Activated CD8-positive, alpha-beta T cell treated with anti-CD3 and anti-CD28 coated beads, Interleukin-2, amount 10 ng/mL, durations not matched to agents 7 days and 5 days (primary cell): ENCODE measurements at regions of chr12 and their contacts with region 1.

Region 1: GRCh38 chr12:100200463-100201181 is at the start of gene ACTR6:
- DNase-seq: peak; percentile 98
- ATAC-seq: peak; percentile 81
- H3K4me3 Mint-ChIP-seq: peak within 1 kb of the TSS; percentile 99
- H3K27ac Mint-ChIP-seq: peak within 1 kb of the TSS; percentile 100
- H3K4me1 Mint-ChIP-seq: peaks cover 30% of the 10 kb centered on the region
- H3K27me3 Mint-ChIP-seq: no peaks in the 10 kb centered on the region
- total RNA-seq, gene ACTR6: 29.5 to 34.8 TPM

Region 2: DNA sequence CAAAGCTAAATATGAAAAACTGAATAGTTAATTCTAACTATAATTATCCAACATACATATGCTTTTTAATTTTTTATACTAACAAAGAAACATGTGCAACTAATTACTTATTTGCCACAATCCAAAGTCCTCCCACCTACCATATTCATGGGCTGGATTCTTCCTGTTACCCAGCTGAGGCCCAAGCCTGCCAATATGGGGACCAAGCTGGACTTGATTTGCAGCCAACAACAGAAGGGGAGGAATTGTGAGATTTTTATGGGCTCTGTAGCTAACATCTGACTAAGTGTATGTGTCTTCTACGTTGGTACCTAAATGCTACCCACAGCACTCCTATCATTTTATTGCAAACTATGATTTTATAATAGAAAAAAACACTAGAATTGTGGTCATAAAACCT is 202.8 kb before region 1 on chr12:
- CTCF ChIA-PET with region 1: no interaction called
- POLR2A ChIA-PET with region 1: no interaction called
- DNase-seq: no peak
- ATAC-seq: no peak
- H3K4me3 Mint-ChIP-seq: no peak overlapping the region
- H3K27ac Mint-ChIP-seq: no peak overlapping the region
- H3K4me1 Mint-ChIP-seq: no peaks in the 10 kb centered on the region
- H3K27me3 Mint-ChIP-seq: no peaks in the 10 kb centered on the region

Region 3: DNA sequence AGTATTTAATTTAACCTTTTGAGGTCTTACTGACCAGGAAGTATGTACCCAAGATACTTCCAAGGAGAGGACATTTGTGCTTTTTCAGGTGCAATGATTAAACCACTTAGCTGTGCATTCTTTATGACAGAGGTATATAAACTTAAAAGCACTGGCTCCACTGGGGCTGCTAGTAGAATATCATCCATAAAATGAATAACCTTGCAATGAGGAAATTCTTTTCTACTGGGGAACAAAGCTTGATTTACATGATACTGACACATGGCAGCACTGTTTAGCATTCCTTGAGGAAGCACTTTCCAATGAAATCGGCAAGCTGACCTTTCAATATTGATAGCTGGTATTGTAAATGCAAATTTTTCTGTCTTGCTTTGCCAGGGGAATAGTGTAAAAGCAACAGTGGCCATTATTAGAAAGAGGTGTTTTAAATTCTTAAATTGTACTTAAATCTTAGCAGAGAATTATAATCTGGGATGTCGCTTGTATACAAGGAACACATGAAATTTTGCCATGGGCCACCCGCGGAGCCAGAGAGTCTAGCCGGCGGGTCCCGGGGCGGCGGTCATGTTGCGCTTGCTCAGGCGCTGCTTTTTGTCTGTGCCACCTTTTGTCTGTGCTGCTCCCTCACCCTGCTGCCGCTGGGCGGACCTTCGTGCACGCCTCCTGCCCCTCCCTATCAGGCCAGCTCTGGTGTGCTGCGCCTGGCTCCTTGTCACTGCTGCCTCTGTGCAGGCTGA is 37.0 kb before region 1 on chr12:
- CTCF ChIA-PET with region 1: interaction called, 4 read pairs
- POLR2A ChIA-PET with region 1: interaction called, 11 read pairs
- DNase-seq: peak; percentile 83
- ATAC-seq: peak; percentile 100
- H3K4me3 Mint-ChIP-seq: peak overlapping the region; percentile 65
- H3K27ac Mint-ChIP-seq: peak overlapping the region; percentile 34
- H3K4me1 Mint-ChIP-seq: peaks cover 15% of the 10 kb centered on the region
- H3K27me3 Mint-ChIP-seq: no peaks in the 10 kb centered on the region

Region 4: DNA sequence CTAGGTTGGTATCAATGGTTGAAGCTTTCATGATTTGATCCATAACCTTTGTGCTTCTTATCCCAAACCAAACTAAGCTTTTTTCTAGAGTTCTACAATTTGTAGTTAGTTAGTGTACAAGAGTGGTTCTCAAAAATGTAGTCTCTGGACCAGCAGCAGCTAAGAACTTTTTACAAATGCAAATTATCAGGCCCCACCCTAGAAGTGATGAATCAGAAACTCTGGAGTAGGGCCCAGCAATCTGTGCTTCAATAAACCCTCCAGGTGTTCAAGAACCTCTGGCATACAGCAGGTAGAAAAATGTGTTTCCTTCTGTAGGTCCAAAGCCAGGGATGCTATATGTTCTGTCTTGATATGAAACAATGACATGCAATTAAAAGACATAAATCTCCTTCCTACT is 26.1 kb before region 1 on chr12:
- CTCF ChIA-PET with region 1: no interaction called
- POLR2A ChIA-PET with region 1: no interaction called
- DNase-seq: no peak
- ATAC-seq: no peak
- H3K4me3 Mint-ChIP-seq: no peak overlapping the region
- H3K27ac Mint-ChIP-seq: no peak overlapping the region
- H3K4me1 Mint-ChIP-seq: no peaks in the 10 kb centered on the region
- H3K27me3 Mint-ChIP-seq: no peaks in the 10 kb centered on the region

Region 5: GRCh38 chr12:100219330-100220109 is 18.9 kb after region 1 on chr12:
- CTCF ChIA-PET with region 1: no interaction called
- POLR2A ChIA-PET with region 1: no interaction called
- DNase-seq: no peak
- ATAC-seq: no peak
- H3K4me3 Mint-ChIP-seq: no peak overlapping the region
- H3K27ac Mint-ChIP-seq: no peak overlapping the region
- H3K4me1 Mint-ChIP-seq: no peaks in the 10 kb centered on the region
- H3K27me3 Mint-ChIP-seq: no peaks in the 10 kb centered on the region

Region 6: GRCh38 chr12:100266835-100267618 is 66.4 kb after region 1 on chr12 and contains the starts of genes DEPDC4 and SCYL2:
- CTCF ChIA-PET with region 1: interaction called, 3 read pairs
- POLR2A ChIA-PET with region 1: interaction called, 37 read pairs
- DNase-seq: peak; percentile 94
- ATAC-seq: peak; percentile 88
- H3K4me3 Mint-ChIP-seq: peak within 1 kb of the TSS; percentile 90
- H3K27ac Mint-ChIP-seq: peak within 1 kb of the TSS; percentile 99
- H3K4me1 Mint-ChIP-seq: peaks cover 23% of the 10 kb centered on the region
- H3K27me3 Mint-ChIP-seq: no peaks in the 10 kb centered on the region
- total RNA-seq, gene DEPDC4: 1.6 to 2.8 TPM
- total RNA-seq, gene SCYL2: 33.6 to 38.7 TPM